GM10248 (cell line): ENCODE measurements at regions of chr3 and their contacts with region 1.

Region 1: DNA sequence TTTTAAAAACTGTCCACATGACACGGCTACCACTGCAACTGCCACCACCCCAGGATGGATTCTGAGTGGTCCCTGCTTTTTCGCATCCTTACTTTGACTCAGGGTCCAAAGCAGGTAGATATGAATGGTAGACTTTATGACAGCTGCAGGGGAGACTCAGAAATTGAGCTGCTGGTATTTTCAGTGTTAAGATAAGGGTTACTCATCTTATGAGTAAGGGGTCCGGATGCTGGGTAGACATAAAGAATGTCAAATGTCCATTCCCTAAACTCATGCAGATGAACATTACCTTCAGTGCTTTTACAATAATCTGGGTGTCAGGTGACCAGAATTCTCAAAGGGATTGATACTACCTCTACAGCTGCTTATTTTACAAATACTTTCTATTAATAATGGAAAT is 25.9 kb upstream of the BBX start:
- DNase-seq: no peak
- CTCF ChIP-seq: no peak

Region 2: GRCh38 chr3:107512108-107512507 is 15.3 kb after region 1 on chr3:
- CTCF ChIA-PET with region 1: interaction called, 10 read pairs
- POLR2A ChIA-PET with region 1: no interaction called
- DNase-seq: no peak
- CTCF ChIP-seq: no peak

Region 3: DNA sequence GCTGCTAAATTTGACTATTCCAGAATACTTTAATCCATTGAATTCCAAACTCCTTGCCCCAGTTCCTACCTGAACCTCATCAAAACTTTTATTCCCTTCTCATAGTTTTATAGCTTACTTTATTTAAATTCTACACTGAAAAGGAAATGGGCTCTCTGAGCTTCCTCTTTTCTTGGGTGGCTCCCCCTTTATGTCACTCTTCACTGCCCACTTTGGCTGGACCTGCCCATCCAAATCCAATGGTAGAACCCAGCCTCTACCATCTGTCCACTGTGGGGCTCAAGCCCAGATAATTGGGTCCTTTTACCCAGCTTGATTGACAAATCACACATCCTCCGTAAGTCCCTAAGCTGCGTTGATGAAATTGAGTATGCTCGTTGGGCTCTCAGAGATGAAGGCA is 242.4 kb after region 1 on chr3:
- CTCF ChIA-PET with region 1: no interaction called
- POLR2A ChIA-PET with region 1: no interaction called
- DNase-seq: no peak
- CTCF ChIP-seq: no peak